AG04450 (cell line): ENCODE measurements at regions of chrX and their contacts with region 1.

Region 1: GRCh38 chrX:16826207-16826606 is 39.9 kb downstream of the TXLNG start:
- DNase-seq: no peak
- H3K4me3 ChIP-seq: no peak overlapping the region
- H3K27ac ChIP-seq: no peak overlapping the region
- H3K27me3 ChIP-seq: no peaks in the 10 kb centered on the region
- CTCF ChIP-seq: peak; percentile 51

Region 2: DNA sequence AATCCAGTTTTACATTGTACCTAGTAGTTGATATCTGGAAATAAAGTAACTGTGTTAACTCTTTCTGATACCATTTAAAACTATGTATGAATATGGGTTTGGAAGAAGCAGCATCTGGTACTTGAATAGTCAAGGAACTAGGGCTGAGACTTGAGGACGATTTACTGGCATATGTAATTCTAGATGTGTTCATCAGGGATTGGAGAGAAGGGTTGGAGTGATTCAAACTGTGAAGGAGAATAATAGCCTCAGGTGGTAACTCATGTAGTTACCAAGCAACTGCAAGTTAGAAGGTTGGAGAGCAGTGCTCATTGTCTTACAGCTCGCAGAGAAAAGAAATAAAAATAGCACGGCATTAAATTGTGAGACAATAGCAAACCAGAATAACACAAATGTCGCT is 69.5 kb before region 1 on chrX:
- CTCF ChIA-PET with region 1: no interaction called
- POLR2A ChIA-PET with region 1: no interaction called
- DNase-seq: no peak
- H3K4me3 ChIP-seq: no peak overlapping the region
- H3K27ac ChIP-seq: no peak overlapping the region
- H3K27me3 ChIP-seq: no peaks in the 10 kb centered on the region
- CTCF ChIP-seq: no peak

Region 3: DNA sequence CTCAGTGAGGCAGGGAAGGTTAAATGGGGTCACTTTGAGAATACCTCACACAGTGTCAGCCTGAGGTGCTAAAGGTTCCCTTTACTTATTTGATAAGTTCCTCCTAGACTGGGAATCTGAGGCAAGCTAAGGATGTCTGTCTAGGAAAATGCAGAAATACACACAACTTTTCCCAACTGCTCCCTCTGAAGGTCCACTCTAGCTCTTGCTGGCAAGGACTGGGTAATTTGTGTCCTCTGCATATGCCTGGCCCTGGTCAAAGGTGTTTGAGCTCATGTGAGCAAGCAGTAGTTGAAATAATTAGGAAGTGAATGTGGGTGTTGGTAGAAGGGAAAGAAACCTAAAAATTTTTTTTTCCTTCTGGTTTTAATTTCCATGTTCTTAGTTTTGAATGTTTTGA is 18.7 kb before region 1 on chrX:
- CTCF ChIA-PET with region 1: interaction called, 12 read pairs
- POLR2A ChIA-PET with region 1: no interaction called
- DNase-seq: no peak
- H3K4me3 ChIP-seq: peak overlapping the region; percentile 50
- H3K27ac ChIP-seq: no peak overlapping the region
- H3K27me3 ChIP-seq: no peaks in the 10 kb centered on the region
- CTCF ChIP-seq: no peak

Region 4: GRCh38 chrX:16882702-16883486 is 56.7 kb after region 1 on chrX:
- CTCF ChIA-PET with region 1: interaction called, 12 read pairs
- POLR2A ChIA-PET with region 1: no interaction called
- DNase-seq: no peak
- H3K4me3 ChIP-seq: peak overlapping the region; percentile 61
- H3K27ac ChIP-seq: no peak overlapping the region
- H3K27me3 ChIP-seq: no peaks in the 10 kb centered on the region
- CTCF ChIP-seq: peak; percentile 64

Region 5: GRCh38 chrX:16892504-16893362 is 66.5 kb after region 1 on chrX:
- CTCF ChIA-PET with region 1: interaction called, 15 read pairs
- POLR2A ChIA-PET with region 1: no interaction called
- DNase-seq: peak; percentile 39
- H3K4me3 ChIP-seq: no peak overlapping the region
- H3K27ac ChIP-seq: no peak overlapping the region
- H3K27me3 ChIP-seq: no peaks in the 10 kb centered on the region
- CTCF ChIP-seq: peak; percentile 75

Region 6: DNA sequence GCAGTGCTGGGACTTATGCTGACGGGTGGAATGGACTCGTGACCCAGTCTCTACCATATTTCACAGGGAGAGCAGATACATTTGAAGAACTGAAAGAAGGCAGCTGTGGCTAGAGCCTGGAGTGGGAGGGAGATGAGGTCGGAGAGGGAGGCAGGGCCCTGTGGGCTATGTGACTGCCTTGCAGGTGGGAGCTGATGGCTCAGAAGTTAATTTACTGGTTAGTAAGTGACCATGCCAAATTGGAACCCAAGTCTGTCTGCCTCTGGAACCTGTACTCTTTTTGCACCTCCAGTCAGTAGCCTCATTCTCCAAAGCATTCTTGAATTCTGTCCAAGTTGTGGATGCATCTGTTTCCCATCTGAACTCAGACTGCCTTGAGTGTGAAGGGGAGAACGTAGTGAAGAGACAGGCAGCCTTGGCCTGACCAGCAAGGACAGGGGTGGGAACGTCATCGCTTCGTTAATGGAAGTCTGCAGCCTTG is 212.5 kb after region 1 on chrX:
- CTCF ChIA-PET with region 1: interaction called, 126 read pairs
- POLR2A ChIA-PET with region 1: no interaction called
- DNase-seq: no peak
- H3K4me3 ChIP-seq: no peak overlapping the region
- H3K27ac ChIP-seq: no peak overlapping the region
- H3K27me3 ChIP-seq: peaks cover 2% of the 10 kb centered on the region
- CTCF ChIP-seq: no peak

Region 7: DNA sequence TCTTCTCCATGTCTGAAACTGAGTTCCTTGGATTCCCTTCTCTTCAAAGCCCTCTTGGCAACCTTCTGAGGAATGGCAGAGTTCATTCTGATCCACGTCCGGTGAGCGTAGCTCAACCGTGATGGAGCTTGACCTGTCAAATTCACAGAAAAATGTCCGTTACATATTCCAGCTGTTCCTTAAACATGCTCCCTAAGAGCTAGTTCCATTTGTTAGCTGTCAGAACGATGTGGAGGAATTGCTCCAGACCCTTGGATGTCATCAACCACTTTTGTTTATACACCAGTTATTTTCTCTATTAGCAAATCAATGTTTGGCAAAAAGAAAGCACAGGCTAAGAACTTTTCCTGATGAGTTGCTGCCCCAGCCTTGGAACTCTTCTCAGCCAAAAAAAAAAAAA is 598.9 kb after region 1 on chrX:
- CTCF ChIA-PET with region 1: no interaction called
- POLR2A ChIA-PET with region 1: no interaction called
- DNase-seq: no peak
- H3K4me3 ChIP-seq: no peak overlapping the region
- H3K27ac ChIP-seq: no peak overlapping the region
- H3K27me3 ChIP-seq: no peaks in the 10 kb centered on the region
- CTCF ChIP-seq: no peak